Activated CD4-positive, alpha-beta memory T cell treated with anti-CD3 and anti-CD28 coated beads for 36 hours (primary cell): ENCODE measurements at regions of chr2 and their contacts with region 1.

Region 1: DNA sequence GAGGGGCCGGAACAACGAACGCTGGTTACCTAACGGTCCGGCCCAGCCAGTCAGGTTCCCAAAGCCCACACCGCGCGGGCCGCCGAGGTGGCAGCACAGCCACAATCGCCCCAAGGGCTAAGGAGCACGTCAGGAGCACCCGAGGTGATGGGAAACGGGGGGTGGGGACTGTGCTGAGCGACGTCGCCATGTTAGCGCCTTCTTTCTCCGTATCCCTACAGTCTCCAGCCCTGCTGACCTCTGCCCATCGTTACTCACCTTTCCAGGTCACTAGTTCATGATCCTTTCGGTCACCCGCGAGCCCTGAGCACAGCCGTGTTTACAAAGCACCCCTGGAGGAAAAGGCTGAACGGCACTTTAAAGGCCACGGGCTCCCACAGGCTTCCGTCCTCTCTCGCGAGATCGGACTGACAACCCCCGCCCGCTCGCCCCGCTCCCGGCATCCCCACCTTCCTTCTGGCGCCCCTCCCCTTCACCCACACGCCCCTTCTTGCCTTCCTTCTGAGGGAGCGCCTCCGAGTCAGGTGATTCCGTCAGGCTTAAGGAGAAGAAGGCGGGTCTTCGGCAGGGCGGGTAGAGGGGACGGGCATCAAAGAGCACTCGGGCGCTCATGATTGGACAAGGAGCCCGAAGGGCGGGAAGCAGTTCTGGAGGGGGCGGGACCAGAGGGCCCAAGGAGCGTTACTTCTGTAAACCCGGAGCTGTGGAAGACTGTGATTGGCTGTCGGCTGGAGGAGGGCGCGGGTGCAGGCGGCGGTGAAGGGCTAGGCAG is at the start of gene ATF2:
- DNase-seq: peak; percentile 99
- H3K4me3 Mint-ChIP-seq: peak within 1 kb of the TSS; percentile 100
- H3K27ac Mint-ChIP-seq: peak within 1 kb of the TSS; percentile 97
- H3K4me1 Mint-ChIP-seq: peaks cover 41% of the 10 kb centered on the region
- H3K27me3 Mint-ChIP-seq: no peaks in the 10 kb centered on the region
- total RNA-seq, gene ATF2: 46.9 to 48.5 TPM

Region 2: GRCh38 chr2:174487108-174487819 is 680.7 kb before region 1 on chr2:
- CTCF ChIA-PET with region 1: no interaction called
- POLR2A ChIA-PET with region 1: no interaction called
- intact Hi-C with region 1: loop called (anchors 1 kb)
- DNase-seq: peak; percentile 100
- H3K4me3 Mint-ChIP-seq: peak overlapping the region; percentile 93
- H3K27ac Mint-ChIP-seq: peak overlapping the region; percentile 95
- H3K4me1 Mint-ChIP-seq: peaks cover 50% of the 10 kb centered on the region
- H3K27me3 Mint-ChIP-seq: no peaks in the 10 kb centered on the region

Region 3: DNA sequence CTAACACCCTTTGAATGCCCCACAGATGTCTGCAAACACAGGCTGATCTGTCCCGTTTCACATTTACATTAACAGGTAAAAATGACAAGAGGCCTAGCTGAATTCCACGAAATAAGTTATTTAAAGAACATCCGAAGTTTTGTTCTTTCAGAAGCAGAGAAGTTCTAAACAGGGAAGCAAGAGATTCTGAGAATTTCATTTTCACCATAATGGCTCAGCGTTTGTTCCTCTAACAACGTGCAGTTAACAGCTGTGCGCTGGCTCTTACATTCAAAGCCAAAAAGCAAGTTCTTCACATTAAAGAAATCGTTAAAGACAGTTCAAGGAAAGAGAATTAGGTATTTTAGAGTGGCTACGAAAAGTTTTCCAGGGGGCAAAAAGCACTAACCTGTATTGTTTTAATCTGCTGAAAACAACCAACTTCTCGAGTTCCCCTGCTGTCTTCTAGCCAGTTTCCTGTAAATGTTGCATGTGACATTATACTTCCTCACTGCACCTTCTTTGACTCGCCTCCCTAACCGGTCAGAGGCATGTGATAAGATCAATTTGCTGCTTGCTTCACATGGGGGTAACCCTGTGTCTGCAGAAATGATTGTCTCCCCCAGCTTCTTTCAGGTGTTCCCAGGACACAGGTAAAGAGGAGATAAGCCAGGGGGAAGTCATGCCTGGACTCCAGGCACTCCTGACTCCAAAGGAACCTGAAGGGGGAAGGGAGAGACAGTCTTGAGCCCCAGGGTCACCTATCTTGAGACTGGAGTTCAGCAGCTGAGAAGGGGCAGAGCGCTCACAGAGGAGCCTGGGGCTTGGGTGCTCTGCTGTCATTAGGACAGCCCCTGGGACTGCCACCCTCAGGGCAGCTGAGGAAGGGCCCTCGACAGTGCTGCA is 533.6 kb before region 1 on chr2:
- CTCF ChIA-PET with region 1: interaction called, 3 read pairs
- POLR2A ChIA-PET with region 1: no interaction called
- intact Hi-C with region 1: loop called (anchors 2 kb)
- DNase-seq: peak; percentile 73
- H3K4me3 Mint-ChIP-seq: peak overlapping the region; percentile 78
- H3K27ac Mint-ChIP-seq: peak overlapping the region; percentile 95
- H3K4me1 Mint-ChIP-seq: peaks cover 56% of the 10 kb centered on the region
- H3K27me3 Mint-ChIP-seq: no peaks in the 10 kb centered on the region

Region 4: GRCh38 chr2:174667379-174667781 is 500.6 kb before region 1 on chr2:
- CTCF ChIA-PET with region 1: no interaction called
- POLR2A ChIA-PET with region 1: no interaction called
- intact Hi-C with region 1: no loop called
- DNase-seq: no peak
- H3K4me3 Mint-ChIP-seq: no peak overlapping the region
- H3K27ac Mint-ChIP-seq: no peak overlapping the region
- H3K4me1 Mint-ChIP-seq: peaks cover 17% of the 10 kb centered on the region
- H3K27me3 Mint-ChIP-seq: no peaks in the 10 kb centered on the region

Region 5: DNA sequence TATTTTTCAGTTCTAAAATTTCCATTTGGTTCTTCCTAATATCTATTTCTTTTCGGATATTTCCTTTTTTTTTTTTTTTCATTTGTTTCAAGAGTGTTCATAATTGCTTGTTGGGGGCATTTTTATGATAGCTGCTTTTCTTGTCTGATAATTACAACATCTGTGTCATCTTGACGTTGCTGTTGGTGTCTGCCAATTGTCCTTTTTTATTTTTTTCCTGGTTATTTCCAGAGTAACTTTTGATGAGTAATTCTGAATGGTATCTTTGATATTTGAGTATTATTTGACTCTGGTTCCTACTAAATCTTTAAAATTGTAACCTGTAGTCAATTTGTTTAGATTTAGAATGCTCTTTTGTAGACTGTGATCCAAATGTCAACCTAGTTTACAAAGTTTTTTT is 352.5 kb before region 1 on chr2:
- CTCF ChIA-PET with region 1: no interaction called
- POLR2A ChIA-PET with region 1: no interaction called
- intact Hi-C with region 1: no loop called
- DNase-seq: no peak
- H3K4me3 Mint-ChIP-seq: no peak overlapping the region
- H3K27ac Mint-ChIP-seq: no peak overlapping the region
- H3K4me1 Mint-ChIP-seq: no peaks in the 10 kb centered on the region
- H3K27me3 Mint-ChIP-seq: no peaks in the 10 kb centered on the region

Region 6: GRCh38 chr2:174835797-174836255 is 332.2 kb before region 1 on chr2:
- CTCF ChIA-PET with region 1: no interaction called
- POLR2A ChIA-PET with region 1: no interaction called
- intact Hi-C with region 1: loop called (anchors 5 kb)
- DNase-seq: peak; percentile 67
- H3K4me3 Mint-ChIP-seq: no peak overlapping the region
- H3K27ac Mint-ChIP-seq: peak overlapping the region; percentile 82
- H3K4me1 Mint-ChIP-seq: peaks cover 36% of the 10 kb centered on the region
- H3K27me3 Mint-ChIP-seq: no peaks in the 10 kb centered on the region

Region 7: GRCh38 chr2:175181104-175181876 is 13.3 kb after region 1 on chr2 and contains the start of gene ATP5MC3:
- CTCF ChIA-PET with region 1: no interaction called
- POLR2A ChIA-PET with region 1: interaction called, 11 read pairs
- intact Hi-C with region 1: loop called (anchors 1 kb)
- DNase-seq: peak; percentile 95
- H3K4me3 Mint-ChIP-seq: peak within 1 kb of the TSS; percentile 95
- H3K27ac Mint-ChIP-seq: peak within 1 kb of the TSS; percentile 95
- H3K4me1 Mint-ChIP-seq: peaks cover 29% of the 10 kb centered on the region
- H3K27me3 Mint-ChIP-seq: no peaks in the 10 kb centered on the region
- total RNA-seq, gene ATP5MC3: 346 to 347 TPM

Region 8: GRCh38 chr2:175195012-175195411 is 27.0 kb after region 1 on chr2:
- CTCF ChIA-PET with region 1: no interaction called
- POLR2A ChIA-PET with region 1: no interaction called
- intact Hi-C with region 1: no loop called
- DNase-seq: no peak
- H3K4me3 Mint-ChIP-seq: no peak overlapping the region
- H3K27ac Mint-ChIP-seq: no peak overlapping the region
- H3K4me1 Mint-ChIP-seq: peaks cover 3% of the 10 kb centered on the region
- H3K27me3 Mint-ChIP-seq: peaks cover 17% of the 10 kb centered on the region

Region 9: DNA sequence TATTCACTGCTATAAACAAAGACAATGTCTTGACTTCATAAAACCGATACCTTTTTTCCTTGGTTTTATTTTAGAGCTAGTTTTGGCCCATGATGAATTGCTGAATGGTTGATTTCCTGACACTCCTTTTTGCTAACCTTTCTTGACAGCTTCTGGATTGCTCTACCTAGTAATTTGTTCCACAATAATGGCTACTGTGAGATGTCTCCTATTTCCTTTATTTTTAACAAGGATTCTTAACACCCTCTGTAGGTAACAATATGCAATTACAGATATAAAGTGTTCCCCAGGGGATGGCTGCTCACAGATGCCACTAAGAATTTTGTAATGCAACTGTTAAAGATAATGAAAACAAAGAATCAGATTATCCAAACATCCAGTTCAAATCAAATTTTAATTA is 114.3 kb after region 1 on chr2:
- CTCF ChIA-PET with region 1: interaction called, 4 read pairs
- POLR2A ChIA-PET with region 1: no interaction called
- intact Hi-C with region 1: loop called (anchors 1 kb)
- DNase-seq: no peak
- H3K4me3 Mint-ChIP-seq: no peak overlapping the region
- H3K27ac Mint-ChIP-seq: no peak overlapping the region
- H3K4me1 Mint-ChIP-seq: peaks cover 3% of the 10 kb centered on the region
- H3K27me3 Mint-ChIP-seq: peaks cover 3% of the 10 kb centered on the region

Region 10: GRCh38 chr2:175353275-175353674 is 185.3 kb after region 1 on chr2:
- CTCF ChIA-PET with region 1: no interaction called
- POLR2A ChIA-PET with region 1: no interaction called
- intact Hi-C with region 1: no loop called
- DNase-seq: no peak
- H3K4me3 Mint-ChIP-seq: no peak overlapping the region
- H3K27ac Mint-ChIP-seq: no peak overlapping the region
- H3K4me1 Mint-ChIP-seq: no peaks in the 10 kb centered on the region
- H3K27me3 Mint-ChIP-seq: peaks cover 17% of the 10 kb centered on the region